Activated naive CD4-positive, alpha-beta T cell treated with anti-CD3 and anti-CD28 coated beads, Interleukin-2, amount 10 ng/mL, durations not matched to agents 7 days and 5 days (primary cell): ENCODE measurements at regions of chr11 and their contacts with region 1.

Region 1: GRCh38 chr11:75204685-75205563 is 35.6 kb upstream of the TPBGL start:
- DNase-seq: peak; percentile 91
- H3K4me3 Mint-ChIP-seq: no peak overlapping the region
- H3K27ac Mint-ChIP-seq: no peak overlapping the region
- H3K4me1 Mint-ChIP-seq: no peaks in the 10 kb centered on the region
- H3K27me3 Mint-ChIP-seq: peaks cover 13% of the 10 kb centered on the region

Region 2: GRCh38 chr11:74929431-74930363 is 275.2 kb before region 1 on chr11:
- CTCF ChIA-PET with region 1: interaction called, 33 read pairs
- DNase-seq: peak; percentile 77
- H3K4me3 Mint-ChIP-seq: no peak overlapping the region
- H3K27ac Mint-ChIP-seq: no peak overlapping the region
- H3K4me1 Mint-ChIP-seq: peaks cover 19% of the 10 kb centered on the region
- H3K27me3 Mint-ChIP-seq: no peaks in the 10 kb centered on the region

Region 3: GRCh38 chr11:75031771-75032549 is 173.0 kb before region 1 on chr11:
- CTCF ChIA-PET with region 1: interaction called, 13 read pairs
- DNase-seq: peak; percentile 78
- H3K4me3 Mint-ChIP-seq: no peak overlapping the region
- H3K27ac Mint-ChIP-seq: peak overlapping the region; percentile 43
- H3K4me1 Mint-ChIP-seq: peaks cover 6% of the 10 kb centered on the region
- H3K27me3 Mint-ChIP-seq: peaks cover 4% of the 10 kb centered on the region

Region 4: GRCh38 chr11:75184792-75185576 is 19.9 kb before region 1 on chr11:
- CTCF ChIA-PET with region 1: interaction called, 10 read pairs
- DNase-seq: no peak
- H3K4me3 Mint-ChIP-seq: no peak overlapping the region
- H3K27ac Mint-ChIP-seq: no peak overlapping the region
- H3K4me1 Mint-ChIP-seq: no peaks in the 10 kb centered on the region
- H3K27me3 Mint-ChIP-seq: peaks cover 57% of the 10 kb centered on the region

Region 5: DNA sequence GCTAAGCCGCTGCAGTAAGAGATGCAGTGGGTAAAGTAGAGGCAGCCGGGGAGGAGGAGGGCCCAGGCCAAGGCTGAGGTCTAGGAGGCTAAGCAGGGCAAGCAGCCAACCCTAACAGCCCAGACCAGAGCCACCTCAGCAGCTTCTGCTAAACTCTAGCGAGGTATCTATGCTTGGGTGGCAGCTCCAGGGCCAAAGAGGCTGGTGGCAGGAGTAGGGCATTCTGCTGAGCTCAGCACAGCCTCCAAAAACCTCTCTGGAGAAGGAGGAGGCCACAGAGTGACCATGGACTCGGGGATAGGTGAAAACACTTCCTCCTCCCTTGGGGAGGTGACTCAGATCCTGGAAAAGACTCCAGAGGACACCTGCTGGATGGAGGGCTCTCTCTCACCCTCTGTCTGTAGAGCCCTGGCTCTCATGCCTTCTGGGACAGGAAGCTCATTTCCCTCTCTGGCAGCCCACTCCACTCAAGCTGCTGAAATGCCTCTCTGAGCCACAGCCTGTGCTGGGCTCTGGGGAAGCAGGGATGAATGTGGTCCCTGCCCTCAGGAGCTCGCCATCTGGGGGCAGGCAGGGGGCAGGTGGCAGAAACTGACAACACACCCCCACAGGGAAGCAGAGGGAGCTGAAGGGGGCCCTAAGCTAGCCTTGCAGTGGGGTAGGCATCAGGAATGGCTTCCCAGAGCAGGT is 19.2 kb after region 1 on chr11:
- CTCF ChIA-PET with region 1: no interaction called
- DNase-seq: no peak
- H3K4me3 Mint-ChIP-seq: no peak overlapping the region
- H3K27ac Mint-ChIP-seq: no peak overlapping the region
- H3K4me1 Mint-ChIP-seq: no peaks in the 10 kb centered on the region
- H3K27me3 Mint-ChIP-seq: peaks cover 19% of the 10 kb centered on the region

Region 6: GRCh38 chr11:75248690-75249268 is 43.9 kb after region 1 on chr11:
- CTCF ChIA-PET with region 1: interaction called, 11 read pairs
- DNase-seq: peak; percentile 91
- H3K4me3 Mint-ChIP-seq: no peak overlapping the region
- H3K27ac Mint-ChIP-seq: no peak overlapping the region
- H3K4me1 Mint-ChIP-seq: no peaks in the 10 kb centered on the region
- H3K27me3 Mint-ChIP-seq: peaks cover 59% of the 10 kb centered on the region

Region 7: DNA sequence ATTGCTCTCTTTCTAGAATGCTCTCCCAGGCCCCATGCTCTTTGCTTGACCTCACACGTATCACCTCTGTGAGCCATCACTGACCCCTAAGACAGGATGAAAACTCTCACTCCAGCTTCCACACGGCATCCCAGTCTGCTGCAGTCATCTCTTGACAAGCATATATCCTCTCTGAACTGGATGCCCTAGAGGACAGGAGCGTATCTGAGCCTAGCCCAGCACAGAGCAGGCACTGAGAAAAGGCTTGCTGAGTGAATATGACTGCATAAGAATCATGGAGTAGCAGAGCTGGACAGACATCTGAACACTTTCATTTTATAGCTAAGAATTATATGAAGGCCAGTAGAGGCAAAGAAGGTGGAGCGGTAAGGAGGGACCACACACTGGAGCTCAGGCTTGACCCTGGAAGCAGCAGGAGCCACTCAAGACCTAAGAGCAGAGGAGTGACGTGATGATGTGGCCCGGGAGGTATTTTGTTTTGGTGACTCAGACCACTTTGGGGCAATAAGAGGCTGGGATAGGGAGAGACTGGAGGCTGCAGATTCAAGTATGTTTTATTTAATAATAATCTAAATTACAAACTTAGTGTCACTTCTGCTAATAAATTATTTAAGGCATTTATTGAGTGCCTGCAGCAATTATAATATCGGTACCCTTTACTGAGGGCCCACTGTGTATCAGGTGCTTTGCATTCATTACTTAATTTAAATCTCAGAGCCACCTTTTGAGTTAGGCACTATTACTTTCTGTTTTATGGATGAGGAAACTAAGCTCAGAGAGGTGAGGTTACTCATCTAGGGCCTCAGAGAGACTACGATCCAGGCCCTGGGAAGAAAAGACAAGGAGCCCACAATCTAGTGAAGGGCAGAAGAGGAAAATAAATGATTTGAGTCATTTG is 421.3 kb after region 1 on chr11:
- CTCF ChIA-PET with region 1: no interaction called
- DNase-seq: no peak
- H3K4me3 Mint-ChIP-seq: no peak overlapping the region
- H3K27ac Mint-ChIP-seq: no peak overlapping the region
- H3K4me1 Mint-ChIP-seq: no peaks in the 10 kb centered on the region
- H3K27me3 Mint-ChIP-seq: peaks cover 20% of the 10 kb centered on the region